SK-N-SH (cell line): ENCODE measurements at regions of chr3 and their contacts with region 1.

Region 1: DNA sequence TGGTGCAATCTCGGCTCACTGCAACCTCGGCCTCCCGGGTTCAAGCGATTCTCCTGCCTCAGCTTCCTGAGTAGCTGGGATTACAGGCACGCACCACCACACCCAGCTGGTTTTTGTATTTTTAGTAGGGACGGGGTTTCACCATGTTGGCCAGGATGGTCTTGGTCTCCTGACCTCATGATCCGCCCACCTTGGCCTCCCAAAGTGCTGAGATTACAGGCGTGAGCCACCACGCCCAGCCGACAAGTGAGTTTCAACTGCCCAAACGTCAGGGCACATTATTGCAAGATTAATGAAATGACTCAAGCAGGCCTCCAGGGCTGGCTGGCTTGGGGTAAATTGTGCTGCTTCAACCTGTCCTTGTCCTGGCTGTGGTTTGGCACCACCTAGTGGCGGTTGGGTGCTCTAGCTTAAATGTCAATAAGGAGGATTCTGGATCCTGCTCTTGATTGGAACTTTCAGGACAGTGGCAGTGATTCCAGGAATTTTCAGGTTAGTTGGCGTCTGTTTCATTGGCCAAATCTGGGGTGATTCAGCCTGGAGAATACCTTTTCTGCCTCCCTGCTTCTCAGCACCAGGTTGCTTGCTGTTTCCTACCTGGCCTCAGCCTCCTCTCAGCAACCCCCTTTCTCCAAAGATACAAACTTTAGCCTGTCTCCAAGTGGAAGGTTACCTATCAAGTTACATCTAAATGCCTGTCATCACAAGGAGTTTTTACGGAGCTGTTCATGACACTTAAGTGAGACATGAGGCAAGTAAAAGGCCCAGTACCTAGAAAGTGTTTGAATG is 32.4 kb upstream of the SACM1L start:
- DNase-seq: peak; percentile 82
- H3K4me3 ChIP-seq: no peak overlapping the region; a peak in 1 of 4 replicates
- H3K27ac ChIP-seq: peak overlapping the region in 1 of 2 experiments; percentile 48; a peak in 2 of 4 replicates
- H3K4me1 ChIP-seq: peaks cover 0 to 8% of the 10 kb centered on the region in 2 experiments; a peak in 3 of 4 replicates
- H3K27me3 ChIP-seq: no peaks in the 10 kb centered on the region
- CTCF ChIP-seq: peak; percentile 94
- EP300 ChIP-seq: no peak
- RAD21 ChIP-seq: peak; percentile 96

Region 2: DNA sequence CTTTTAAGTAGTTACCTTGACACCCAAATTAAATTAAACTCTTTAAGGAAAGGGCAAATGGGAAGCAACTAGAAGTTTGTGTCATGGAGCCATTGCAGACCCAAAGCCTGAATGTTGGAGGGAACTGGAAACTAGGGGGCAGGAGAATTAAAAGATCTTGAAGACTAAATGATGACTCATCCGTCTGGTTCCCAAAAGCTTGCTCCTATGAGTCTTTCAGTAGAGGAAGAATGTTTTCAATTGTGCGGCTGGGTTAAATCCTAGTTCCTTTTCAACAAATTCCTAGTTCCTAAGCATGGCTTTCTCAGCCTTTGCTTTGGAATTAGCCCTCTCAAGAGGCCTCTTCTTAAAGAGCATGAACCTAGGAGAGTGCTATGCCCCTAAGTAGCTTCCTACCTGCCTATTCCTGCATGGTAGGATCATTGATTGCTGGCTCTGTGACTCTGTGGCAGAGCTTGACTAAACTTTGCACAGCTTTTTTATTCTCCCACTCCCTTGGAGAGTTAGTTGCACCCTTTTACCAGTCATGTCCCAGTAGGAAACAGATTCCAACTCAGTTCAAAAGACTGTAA is 613.0 kb before region 1 on chr3:
- CTCF ChIA-PET with region 1: interaction called, 20 read pairs
- POLR2A ChIA-PET with region 1: no interaction called
- DNase-seq: no peak
- H3K4me3 ChIP-seq: no peak overlapping the region
- H3K27ac ChIP-seq: peak overlapping the region; percentile 51 to 87; a peak in 3 of 4 replicates
- H3K4me1 ChIP-seq: peaks cover 0 to 10% of the 10 kb centered on the region in 2 experiments; a peak in 2 of 4 replicates
- H3K27me3 ChIP-seq: no peaks in the 10 kb centered on the region
- CTCF ChIP-seq: peak; percentile 45
- EP300 ChIP-seq: no peak
- RAD21 ChIP-seq: peak; percentile 33; the same call in 1 of the 2 replicates

Region 3: GRCh38 chr3:45507820-45508317 is 148.9 kb before region 1 on chr3:
- CTCF ChIA-PET with region 1: interaction called, 135 read pairs
- POLR2A ChIA-PET with region 1: interaction called, 3 read pairs
- DNase-seq: peak; percentile 30
- H3K4me3 ChIP-seq: peak overlapping the region in 1 of 2 experiments; percentile 5; a peak in 1 of 4 replicates
- H3K27ac ChIP-seq: peak overlapping the region in 1 of 2 experiments; percentile 76; a peak in 2 of 4 replicates
- H3K4me1 ChIP-seq: peaks cover 2 to 30% of the 10 kb centered on the region in 2 experiments; a peak in 3 of 4 replicates
- H3K27me3 ChIP-seq: no peaks in the 10 kb centered on the region
- CTCF ChIP-seq: peak; percentile 48
- EP300 ChIP-seq: no peak
- RAD21 ChIP-seq: peak; percentile 43

Region 4: DNA sequence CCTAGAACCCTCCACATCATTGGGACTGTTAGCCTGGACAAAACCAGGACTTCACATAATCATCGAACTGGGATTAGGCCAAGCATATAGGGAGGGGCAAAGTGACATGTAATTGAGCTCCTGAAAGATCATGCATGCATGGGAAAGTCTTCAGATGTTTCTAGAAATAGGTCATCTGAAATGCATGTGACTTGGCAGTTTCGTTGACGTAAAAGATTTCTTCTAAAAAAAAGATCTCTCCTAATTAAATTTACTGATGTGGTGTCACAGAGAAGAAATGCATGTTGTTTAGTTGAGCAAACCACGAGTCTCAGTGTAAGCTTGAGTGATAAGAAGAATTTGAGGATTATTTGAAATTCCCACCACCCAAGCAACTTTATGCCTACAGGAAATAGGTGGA is 132.2 kb before region 1 on chr3:
- CTCF ChIA-PET with region 1: interaction called, 12 read pairs
- POLR2A ChIA-PET with region 1: no interaction called
- DNase-seq: no peak
- H3K4me3 ChIP-seq: no peak overlapping the region
- H3K27ac ChIP-seq: peak overlapping the region in 1 of 2 experiments; percentile 24; a peak in 1 of 4 replicates
- H3K4me1 ChIP-seq: 0 out of 4 replicates have a peak, but pooled peaks cover 0 to 11% of the 10 kb centered on the region in 2 experiments
- H3K27me3 ChIP-seq: no peaks in the 10 kb centered on the region
- CTCF ChIP-seq: no peak
- EP300 ChIP-seq: no peak
- RAD21 ChIP-seq: no peak

Region 5: DNA sequence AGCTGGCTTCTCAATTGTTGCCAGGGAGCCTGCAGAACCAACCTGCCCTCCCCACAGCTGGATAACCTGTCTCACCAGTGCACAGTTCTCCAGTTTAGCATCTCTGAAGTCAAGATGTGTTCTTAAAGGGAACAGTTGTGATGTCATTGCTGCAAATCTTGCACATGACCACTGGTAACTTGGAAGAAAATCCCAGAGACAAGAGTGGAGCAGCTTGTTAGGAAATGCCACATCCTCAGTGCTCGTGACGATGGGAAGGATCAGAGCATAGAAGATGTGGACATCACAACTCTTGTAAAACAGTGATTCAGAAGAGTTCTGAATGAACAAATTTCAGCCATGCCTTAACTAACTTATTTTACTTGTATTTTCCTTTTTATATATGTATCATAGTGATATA is 98.3 kb before region 1 on chr3:
- CTCF ChIA-PET with region 1: interaction called, 10 read pairs
- POLR2A ChIA-PET with region 1: no interaction called
- DNase-seq: no peak
- H3K4me3 ChIP-seq: no peak overlapping the region
- H3K27ac ChIP-seq: no peak overlapping the region
- H3K4me1 ChIP-seq: peaks cover 9 to 22% of the 10 kb centered on the region in 2 experiments
- H3K27me3 ChIP-seq: no peaks in the 10 kb centered on the region
- CTCF ChIP-seq: no peak
- EP300 ChIP-seq: no peak
- RAD21 ChIP-seq: no peak

Region 6: DNA sequence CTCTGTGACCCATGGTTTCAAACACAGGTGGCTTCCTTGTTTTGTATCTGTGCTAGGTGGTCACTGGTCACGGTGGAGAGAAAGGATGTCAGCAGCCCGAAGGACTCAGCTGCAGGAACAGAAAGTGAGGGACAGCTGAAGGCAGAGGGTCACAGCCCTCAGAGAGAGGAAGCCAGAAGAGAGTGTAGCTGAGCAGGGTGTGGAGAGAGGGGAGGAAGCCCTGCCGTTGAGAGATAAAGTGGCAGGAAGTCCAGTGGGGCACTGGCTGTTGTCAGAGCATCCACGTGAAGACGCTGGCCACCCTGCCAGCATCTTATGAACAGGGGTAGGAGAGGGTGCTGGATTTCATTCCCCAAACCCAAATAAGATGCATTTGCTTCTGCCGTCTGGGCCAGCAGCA is 25.3 kb before region 1 on chr3:
- CTCF ChIA-PET with region 1: interaction called, 12 read pairs
- POLR2A ChIA-PET with region 1: no interaction called
- DNase-seq: no peak
- H3K4me3 ChIP-seq: no peak overlapping the region
- H3K27ac ChIP-seq: no peak overlapping the region; a peak in 1 of 4 replicates
- H3K4me1 ChIP-seq: peaks cover 8 to 9% of the 10 kb centered on the region in 2 experiments; a peak in 3 of 4 replicates
- H3K27me3 ChIP-seq: no peaks in the 10 kb centered on the region
- CTCF ChIP-seq: no peak
- EP300 ChIP-seq: no peak
- RAD21 ChIP-seq: no peak

Region 7: GRCh38 chr3:45688882-45689756 is 32.4 kb after region 1 on chr3 and contains the start of gene SACM1L:
- CTCF ChIA-PET with region 1: interaction called, 11 read pairs
- POLR2A ChIA-PET with region 1: no interaction called
- DNase-seq: peak; percentile 91
- H3K4me3 ChIP-seq: peak within 1 kb of the TSS; percentile 86 to 90
- H3K27ac ChIP-seq: peak within 1 kb of the TSS; percentile 90 to 94
- H3K4me1 ChIP-seq: peaks cover 6 to 11% of the 10 kb centered on the region in 2 experiments; a peak in 2 of 4 replicates
- H3K27me3 ChIP-seq: no peaks in the 10 kb centered on the region
- CTCF ChIP-seq: no peak
- EP300 ChIP-seq: peak; percentile 39 to 60; a peak in 3 of 4 replicates
- RAD21 ChIP-seq: no peak; the same call in 1 of the 2 replicates
- polyA plus RNA-seq, gene SACM1L: 11.2 and 16.7 TPM in 2 replicates